OCI-LY7 (cell line): ENCODE measurements at regions of chr3 and their contacts with region 1.

Region 1: GRCh38 chr3:129249276-129250065 is at the start of gene COPG1:
- DNase-seq: peak; percentile 92
- H3K4me3 ChIP-seq: peak within 1 kb of the TSS; percentile 92
- H3K27ac ChIP-seq: peak within 1 kb of the TSS; percentile 59
- H3K4me1 ChIP-seq: peaks cover 35% of the 10 kb centered on the region
- CTCF ChIP-seq: no peak
- total RNA-seq, gene COPG1: 91.9 and 135 TPM in 2 replicates

Region 2: GRCh38 chr3:128969993-128970739 is 279.3 kb before region 1 on chr3:
- CTCF ChIA-PET with region 1: interaction called, 5 read pairs
- POLR2A ChIA-PET with region 1: interaction called, 3 read pairs
- intact Hi-C with region 1: loop called (anchors 1 kb)
- DNase-seq: peak; percentile 73
- H3K4me3 ChIP-seq: no peak overlapping the region
- H3K27ac ChIP-seq: no peak overlapping the region
- H3K4me1 ChIP-seq: peaks cover 9% of the 10 kb centered on the region
- CTCF ChIP-seq: peak; percentile 100

Region 3: GRCh38 chr3:129052675-129053074 is 196.8 kb before region 1 on chr3:
- CTCF ChIA-PET with region 1: interaction called, 17 read pairs
- POLR2A ChIA-PET with region 1: interaction called, 3 read pairs
- intact Hi-C with region 1: loop called (anchors 1 kb)
- DNase-seq: no peak
- H3K4me3 ChIP-seq: no peak overlapping the region
- H3K27ac ChIP-seq: no peak overlapping the region
- H3K4me1 ChIP-seq: peaks cover 9% of the 10 kb centered on the region
- CTCF ChIP-seq: no peak

Region 4: GRCh38 chr3:129065720-129066073 is 183.8 kb before region 1 on chr3:
- CTCF ChIA-PET with region 1: no interaction called
- POLR2A ChIA-PET with region 1: no interaction called
- intact Hi-C with region 1: no loop called
- DNase-seq: no peak
- H3K4me3 ChIP-seq: no peak overlapping the region
- H3K27ac ChIP-seq: no peak overlapping the region
- H3K4me1 ChIP-seq: peaks cover under 1% of the 10 kb centered on the region
- CTCF ChIP-seq: no peak

Region 5: DNA sequence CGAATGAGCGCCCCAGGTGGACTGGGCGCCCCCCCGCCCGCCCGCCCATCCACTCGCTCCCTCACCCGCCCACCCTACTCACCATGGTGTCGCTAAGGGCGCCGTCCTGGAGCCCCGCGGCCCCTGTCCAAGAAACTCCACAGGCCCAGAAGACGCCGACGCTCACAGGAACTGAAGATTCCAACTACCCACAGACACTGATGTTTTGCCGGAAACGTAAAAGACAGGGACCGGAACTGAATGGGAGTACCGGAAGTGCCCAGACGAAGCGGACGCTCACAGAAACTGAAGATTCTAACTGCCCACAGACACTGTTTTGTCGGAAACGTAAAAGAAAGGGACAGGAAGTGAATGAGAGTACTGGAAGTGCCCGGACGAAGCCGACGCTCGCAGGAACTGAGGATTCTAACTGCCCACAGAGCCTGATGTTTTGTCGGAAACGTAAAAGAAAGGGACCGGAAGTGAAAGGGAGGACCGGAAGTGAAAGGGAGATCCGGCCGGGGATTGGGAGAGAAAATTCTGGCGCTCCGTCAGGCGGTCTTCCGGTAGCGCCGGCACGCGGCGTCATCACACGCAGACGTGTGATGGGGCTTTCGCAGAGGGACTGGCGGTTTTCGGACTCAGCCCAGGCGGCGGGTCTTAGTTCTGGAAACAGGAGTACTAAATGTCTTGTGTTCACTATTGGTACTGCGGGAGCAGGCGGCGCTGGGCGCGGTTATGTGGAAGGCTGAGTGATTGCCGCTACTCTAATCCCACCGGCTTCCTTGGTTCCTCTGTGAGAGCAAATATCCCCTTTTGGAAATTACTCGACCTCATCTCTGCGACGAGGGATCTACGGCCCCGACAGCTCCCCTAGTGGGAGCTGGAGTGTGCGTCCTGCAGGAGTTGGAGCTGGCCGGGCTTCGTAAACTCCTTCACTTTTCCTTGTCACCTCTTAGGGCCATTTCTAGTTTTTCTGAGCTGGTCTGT is 88.3 kb before region 1 on chr3 and contains the start of gene ISY1:
- CTCF ChIA-PET with region 1: interaction called, 6 read pairs
- POLR2A ChIA-PET with region 1: interaction called, 4 read pairs
- intact Hi-C with region 1: loop called (anchors 1 kb)
- DNase-seq: peak; percentile 97
- H3K4me3 ChIP-seq: peak within 1 kb of the TSS; percentile 95
- H3K27ac ChIP-seq: peak within 1 kb of the TSS; percentile 91
- H3K4me1 ChIP-seq: peaks cover 28% of the 10 kb centered on the region
- CTCF ChIP-seq: peak; percentile 94
- total RNA-seq, gene ISY1: 34.5 and 40.3 TPM in 2 replicates

Region 6: GRCh38 chr3:129278439-129278970 is 29.0 kb after region 1 on chr3 and contains the start of gene HMCES:
- CTCF ChIA-PET with region 1: no interaction called
- POLR2A ChIA-PET with region 1: interaction called, 13 read pairs
- intact Hi-C with region 1: loop called (anchors 2 kb)
- DNase-seq: peak; percentile 95
- H3K4me3 ChIP-seq: peak within 1 kb of the TSS; percentile 93
- H3K27ac ChIP-seq: peak within 1 kb of the TSS; percentile 94
- H3K4me1 ChIP-seq: peaks cover 77% of the 10 kb centered on the region
- CTCF ChIP-seq: no peak
- total RNA-seq, gene HMCES: 90.6 and 104 TPM in 2 replicates

Region 7: DNA sequence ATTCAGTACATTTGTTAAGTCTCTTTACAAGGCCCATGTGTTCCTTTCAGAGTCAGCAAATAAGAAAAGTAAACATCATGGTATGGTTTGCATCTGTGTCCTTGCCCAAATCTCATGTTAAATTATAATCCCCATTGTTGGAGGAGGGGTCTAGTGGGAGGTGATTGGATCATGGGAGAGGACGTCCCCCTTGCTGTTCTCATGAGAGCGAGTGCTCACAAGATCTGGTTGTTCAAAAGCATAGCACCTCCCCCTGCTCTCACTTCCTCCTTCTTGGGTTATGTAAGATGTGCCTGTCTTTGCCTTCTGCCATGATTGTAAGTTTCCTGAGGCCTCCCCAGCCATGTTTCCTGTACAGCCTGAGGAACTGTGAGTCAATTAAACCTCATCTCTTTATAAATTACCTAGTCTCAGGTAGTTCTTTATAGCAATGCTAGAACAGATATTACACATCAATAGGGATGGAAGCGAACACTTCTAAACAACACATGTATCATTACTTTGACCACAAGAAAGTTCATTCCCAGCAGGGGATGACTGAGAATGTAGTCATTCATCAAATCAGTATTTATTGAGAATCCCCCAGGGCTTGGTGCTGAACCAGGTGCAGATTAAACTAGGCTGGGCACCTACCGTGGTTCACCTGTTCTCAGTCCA is 174.8 kb after region 1 on chr3:
- CTCF ChIA-PET with region 1: no interaction called
- POLR2A ChIA-PET with region 1: no interaction called
- intact Hi-C with region 1: no loop called
- DNase-seq: peak; percentile 89
- H3K4me3 ChIP-seq: peak overlapping the region; percentile 8
- H3K27ac ChIP-seq: peak overlapping the region; percentile 55
- H3K4me1 ChIP-seq: peaks cover 35% of the 10 kb centered on the region
- CTCF ChIP-seq: no peak